Tibial artery (tissue), 4 donors: ENCODE measurements at regions of chr3 and their contacts with region 1.

Region 1: DNA sequence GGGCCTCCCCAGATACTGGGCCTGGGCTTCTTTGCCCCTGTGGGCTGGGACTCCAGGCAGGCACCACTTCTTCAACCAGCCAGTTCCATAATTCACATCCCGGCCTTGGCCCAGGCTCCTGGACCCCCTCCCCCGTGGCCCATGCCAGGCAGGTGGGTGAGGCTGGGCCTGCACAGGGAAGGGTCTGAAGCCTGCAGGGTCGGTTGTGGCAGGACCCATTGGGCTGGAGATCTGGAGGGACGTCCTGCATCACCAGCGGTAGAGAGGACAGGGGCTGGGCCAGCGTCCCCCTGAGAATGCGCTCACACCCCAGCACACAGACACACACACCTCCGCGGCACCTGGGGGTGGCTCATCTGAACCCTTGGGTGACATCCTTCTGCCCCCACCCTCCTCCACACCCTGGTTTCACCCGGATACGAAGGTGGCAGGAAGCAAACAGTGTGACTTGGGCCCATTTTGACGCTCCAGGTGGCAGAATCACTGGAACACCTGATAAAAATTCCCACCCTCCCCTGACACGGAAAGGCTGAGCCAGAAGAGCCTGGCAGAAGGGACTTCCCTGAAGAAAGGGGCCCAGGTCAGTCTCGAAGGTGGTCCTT is 15.4 kb downstream of the ZDHHC19 start:
- DNase-seq: no peak
- H3K4me3 ChIP-seq: no peak overlapping the region
- H3K27ac ChIP-seq: no peak overlapping the region
- H3K4me1 ChIP-seq: no peaks in the 10 kb centered on the region
- H3K27me3 ChIP-seq: no peaks in the 10 kb centered on the region
- CTCF ChIP-seq: no peak

Region 2: GRCh38 chr3:195020921-195021320 is 1174.8 kb before region 1 on chr3:
- intact Hi-C with region 1: no loop called
- DNase-seq: peak in 1 of 2 donors; percentile 12
- H3K4me3 ChIP-seq: no peak overlapping the region
- H3K27ac ChIP-seq: no peak overlapping the region
- H3K4me1 ChIP-seq: no peaks in the 10 kb centered on the region
- H3K27me3 ChIP-seq: peaks cover 0 to 7% of the 10 kb centered on the region in 2 donors
- CTCF ChIP-seq: no peak

Region 3: DNA sequence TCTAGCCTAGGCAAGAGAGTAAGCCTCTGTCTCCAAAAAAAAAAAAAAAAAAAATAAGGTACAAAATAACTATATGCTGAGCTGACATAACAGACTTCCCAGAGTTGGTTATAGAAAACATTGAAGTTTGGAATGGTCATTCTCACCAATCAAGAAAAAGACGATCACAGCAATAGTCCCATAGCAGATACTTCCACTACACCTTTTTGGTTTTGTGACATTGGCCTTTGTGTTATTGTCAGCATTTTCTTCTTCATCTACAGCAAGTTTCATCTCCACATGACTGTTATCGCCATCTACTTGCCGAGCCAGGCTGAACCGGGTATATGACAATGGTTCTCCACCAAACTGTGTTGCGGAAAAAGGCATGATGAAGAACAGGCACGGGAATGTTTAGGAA is 120.8 kb before region 1 on chr3:
- intact Hi-C with region 1: loop called (anchors 2 kb)
- DNase-seq: no peak
- H3K4me3 ChIP-seq: no peak overlapping the region
- H3K27ac ChIP-seq: no peak overlapping the region
- H3K4me1 ChIP-seq: peaks cover 0 to under 1% (median 0%) of the 10 kb centered on the region in 4 donors
- H3K27me3 ChIP-seq: no peaks in the 10 kb centered on the region
- CTCF ChIP-seq: no peak